ENCODE measurements at regions of chr14 and their contacts with region 1.

Region 1: GRCh38 chr14:61147831-61148549 is 133.1 kb downstream of the TMEM30B start:
- DNase-seq: peak; percentile 77 to 89
- ATAC-seq: peak; percentile 44 to 65
- H3K4me3 ChIP-seq: peak overlapping the region in 3 of 4 donors; percentile 3 to 27 (median 16)
- H3K27ac ChIP-seq: peak overlapping the region; percentile 84 to 95 (median 88)
- H3K4me1 ChIP-seq: peaks cover 35 to 43% of the 10 kb centered on the region in 2 donors
- H3K27me3 ChIP-seq: no peaks in the 10 kb centered on the region
- CTCF ChIP-seq: no peak
- POLR2A ChIP-seq: no peak

Region 2: GRCh38 chr14:61063461-61063860 is 84.5 kb before region 1 on chr14:
- in situ Hi-C with region 1: no loop called
- intact Hi-C with region 1: no loop called
- DNase-seq: no peak
- ATAC-seq: no peak
- H3K4me3 ChIP-seq: no peak overlapping the region
- H3K27ac ChIP-seq: no peak overlapping the region
- H3K4me1 ChIP-seq: peaks cover 4 to 5% of the 10 kb centered on the region in 2 donors
- H3K27me3 ChIP-seq: no peaks in the 10 kb centered on the region
- CTCF ChIP-seq: no peak
- POLR2A ChIP-seq: no peak

Region 3: DNA sequence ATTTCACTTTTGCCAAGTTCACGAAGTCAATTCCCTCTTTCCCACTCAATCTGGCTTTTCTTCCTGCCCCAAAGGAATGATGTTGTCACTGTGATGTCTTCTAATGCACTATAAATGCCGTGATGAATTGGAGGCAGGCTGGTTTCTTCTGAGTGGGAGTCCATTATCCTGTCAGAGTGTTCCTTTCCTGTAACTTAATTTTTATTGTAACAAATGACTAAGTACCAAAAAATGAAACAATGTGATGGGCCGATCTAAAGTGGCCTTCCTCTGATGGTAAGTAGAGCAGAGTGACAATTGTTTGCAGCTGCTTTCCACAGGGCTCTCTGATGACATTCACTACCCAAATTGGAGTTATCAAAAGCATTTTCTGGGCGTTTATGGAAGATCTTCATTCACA is 111.0 kb after region 1 on chr14:
- in situ Hi-C with region 1: no loop called
- intact Hi-C with region 1: loop called (anchors 5 kb)
- DNase-seq: no peak
- ATAC-seq: no peak
- H3K4me3 ChIP-seq: no peak overlapping the region
- H3K27ac ChIP-seq: peak overlapping the region; percentile 80 to 85 (median 84)
- H3K4me1 ChIP-seq: peaks cover 10 to 32% of the 10 kb centered on the region in 2 donors
- H3K27me3 ChIP-seq: no peaks in the 10 kb centered on the region
- CTCF ChIP-seq: no peak
- POLR2A ChIP-seq: no peak